Mucosa of descending colon (tissue), 3 donors: ENCODE measurements at regions of chr10 and their contacts with region 1.

Region 1: DNA sequence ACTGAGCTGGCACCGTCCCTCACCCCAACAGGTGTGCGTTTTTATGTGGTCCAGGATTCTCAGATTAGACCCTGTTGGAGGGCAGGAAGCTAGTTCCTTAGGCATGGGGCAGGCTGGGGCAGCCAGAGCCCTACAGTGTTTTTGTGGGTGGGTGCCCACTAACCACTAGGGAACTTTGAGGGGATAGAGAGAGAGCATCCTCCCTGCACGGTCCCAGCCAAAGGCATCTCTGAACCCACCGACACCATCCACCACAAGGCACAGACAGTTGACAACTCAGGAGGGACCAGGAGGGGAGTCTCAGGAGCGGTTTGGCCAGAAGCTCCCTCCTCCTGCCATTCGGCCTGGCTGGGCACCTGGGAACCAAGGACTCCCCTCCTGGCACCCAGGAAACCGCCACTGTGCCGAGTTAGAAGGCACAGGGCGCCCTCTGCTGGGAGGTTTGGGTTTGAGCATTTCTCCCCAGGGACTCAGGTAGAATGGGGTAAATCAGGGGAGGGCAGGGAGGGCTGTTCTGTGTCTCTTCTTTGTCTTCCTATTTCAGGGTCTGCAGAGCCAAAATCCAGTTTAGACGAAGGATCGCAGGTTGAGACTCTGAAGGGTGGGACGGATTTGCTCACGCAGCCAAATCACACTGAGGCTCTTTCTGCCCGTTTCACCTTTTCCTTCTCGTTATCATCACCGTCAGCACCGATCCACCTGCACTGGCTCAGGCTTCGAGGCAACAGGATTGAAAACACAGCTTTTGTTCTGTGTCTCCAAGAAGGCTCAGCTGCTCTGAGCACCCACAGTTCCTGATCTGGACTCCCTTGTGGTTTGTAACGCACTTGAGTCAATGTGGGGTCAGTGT is 84.8 kb upstream of the COL13A1 start:
- DNase-seq: peak in 2 of 3 donors; percentile 71 to 80
- ATAC-seq: peak; percentile 86
- H3K4me3 ChIP-seq: no peak overlapping the region
- H3K4me1 ChIP-seq: no peaks in the 10 kb centered on the region
- CTCF ChIP-seq: peak; percentile 35

Region 2: DNA sequence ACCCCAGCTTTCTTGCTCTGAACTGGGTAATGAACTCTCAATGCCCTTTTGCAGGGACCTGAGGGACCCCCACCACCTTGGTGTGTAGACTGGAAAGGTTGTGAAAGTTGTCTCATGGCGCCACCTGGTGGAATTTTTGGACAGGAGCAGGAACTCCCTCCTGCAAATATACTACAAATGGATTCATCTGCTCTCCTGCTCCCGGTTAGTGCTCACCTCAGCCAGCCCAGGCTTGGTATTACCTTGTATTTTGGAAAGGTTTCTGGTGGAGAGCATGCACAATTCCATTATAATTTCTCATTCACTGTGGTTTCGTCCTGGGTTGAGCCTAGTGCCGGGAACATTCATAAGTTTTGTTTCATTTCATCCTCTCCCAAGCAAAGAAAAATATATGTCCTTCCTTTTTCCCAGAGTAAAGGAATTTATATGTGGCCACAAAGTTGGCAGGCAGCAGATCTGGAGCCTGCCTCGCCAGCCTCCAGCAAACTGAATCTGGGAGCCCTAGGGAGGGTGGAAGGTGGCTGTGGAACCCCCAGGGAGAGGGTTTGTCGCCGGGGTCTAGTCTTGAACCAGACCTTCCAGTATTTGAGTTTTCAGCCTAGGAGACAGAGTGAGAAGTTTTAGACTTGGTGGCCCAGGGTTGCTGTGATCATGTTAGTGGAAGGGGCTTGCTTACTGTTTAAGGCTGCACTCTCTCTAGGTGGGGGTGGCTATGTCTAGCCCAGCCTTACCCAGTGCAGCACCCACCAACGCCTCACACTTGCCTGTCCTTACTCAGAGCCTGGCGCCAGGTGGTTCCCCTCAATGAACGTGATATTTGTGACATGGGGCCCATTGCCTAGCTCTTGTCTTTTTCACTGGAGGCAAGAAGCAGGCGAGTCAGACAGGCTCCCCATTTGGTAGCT is 77.4 kb before region 1 on chr10:
- intact Hi-C with region 1: loop called in 1 of 2 experiments (anchors 5 kb)
- DNase-seq: peak in 2 of 3 donors; percentile 59 to 82
- ATAC-seq: peak; percentile 61
- H3K4me3 ChIP-seq: no peak overlapping the region
- H3K4me1 ChIP-seq: no peaks in the 10 kb centered on the region
- CTCF ChIP-seq: peak; percentile 75

Region 3: DNA sequence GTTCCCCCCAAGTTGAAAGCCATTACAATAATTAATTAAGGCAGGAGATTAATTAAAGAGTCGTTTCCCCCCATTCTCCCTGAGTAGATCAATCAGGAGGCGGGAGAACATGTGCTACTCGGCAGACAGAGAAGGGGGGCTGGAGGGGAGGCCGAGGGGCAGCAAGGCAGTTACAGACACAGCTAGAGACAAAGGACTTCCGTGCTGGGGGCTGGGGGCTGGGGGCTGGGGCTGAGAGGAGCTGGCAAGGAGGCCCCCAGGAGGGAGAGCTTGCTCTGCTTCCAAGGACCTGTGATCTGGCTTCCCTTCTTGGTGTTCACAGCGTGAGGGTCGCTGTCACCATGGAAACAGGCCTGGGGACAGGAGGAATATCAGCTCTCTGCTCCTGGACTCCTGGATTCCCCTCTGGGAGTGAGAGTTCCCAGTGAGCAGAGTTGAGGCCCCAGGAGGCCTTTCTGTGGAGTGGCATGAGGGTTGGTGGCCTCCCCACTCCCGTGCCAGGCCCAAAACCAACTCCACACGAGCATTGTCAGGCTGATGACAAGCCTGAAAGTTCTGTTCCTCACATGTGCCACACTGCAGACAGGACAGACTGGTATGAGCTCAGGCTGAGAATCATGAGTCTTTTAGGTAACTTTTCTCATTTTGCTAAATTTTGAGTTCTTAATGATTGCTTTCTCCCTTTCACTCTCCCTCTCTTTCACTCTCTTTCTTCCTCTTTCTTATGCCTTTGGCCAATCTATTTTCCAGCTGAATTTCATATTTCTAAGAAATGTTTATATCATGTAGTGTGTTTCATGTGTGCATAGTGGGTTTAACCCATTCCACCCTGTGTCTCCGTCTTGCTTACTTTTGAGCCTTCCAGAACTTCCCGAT is 70.5 kb before region 1 on chr10:
- intact Hi-C with region 1: loop called (anchors 2 to 5 kb)
- DNase-seq: no peak
- ATAC-seq: no peak
- H3K4me3 ChIP-seq: no peak overlapping the region
- H3K4me1 ChIP-seq: no peaks in the 10 kb centered on the region
- CTCF ChIP-seq: no peak

Region 4: GRCh38 chr10:70906953-70907636 is 1190.2 kb after region 1 on chr10:
- intact Hi-C with region 1: no loop called
- DNase-seq: peak in 2 of 3 donors; percentile 31 to 44
- ATAC-seq: peak; percentile 59
- H3K4me3 ChIP-seq: no peak overlapping the region
- H3K4me1 ChIP-seq: peaks cover 4% of the 10 kb centered on the region
- CTCF ChIP-seq: no peak